GM12878 (cell line): ENCODE measurements at regions of chr10 and their contacts with region 1.

Region 1: DNA sequence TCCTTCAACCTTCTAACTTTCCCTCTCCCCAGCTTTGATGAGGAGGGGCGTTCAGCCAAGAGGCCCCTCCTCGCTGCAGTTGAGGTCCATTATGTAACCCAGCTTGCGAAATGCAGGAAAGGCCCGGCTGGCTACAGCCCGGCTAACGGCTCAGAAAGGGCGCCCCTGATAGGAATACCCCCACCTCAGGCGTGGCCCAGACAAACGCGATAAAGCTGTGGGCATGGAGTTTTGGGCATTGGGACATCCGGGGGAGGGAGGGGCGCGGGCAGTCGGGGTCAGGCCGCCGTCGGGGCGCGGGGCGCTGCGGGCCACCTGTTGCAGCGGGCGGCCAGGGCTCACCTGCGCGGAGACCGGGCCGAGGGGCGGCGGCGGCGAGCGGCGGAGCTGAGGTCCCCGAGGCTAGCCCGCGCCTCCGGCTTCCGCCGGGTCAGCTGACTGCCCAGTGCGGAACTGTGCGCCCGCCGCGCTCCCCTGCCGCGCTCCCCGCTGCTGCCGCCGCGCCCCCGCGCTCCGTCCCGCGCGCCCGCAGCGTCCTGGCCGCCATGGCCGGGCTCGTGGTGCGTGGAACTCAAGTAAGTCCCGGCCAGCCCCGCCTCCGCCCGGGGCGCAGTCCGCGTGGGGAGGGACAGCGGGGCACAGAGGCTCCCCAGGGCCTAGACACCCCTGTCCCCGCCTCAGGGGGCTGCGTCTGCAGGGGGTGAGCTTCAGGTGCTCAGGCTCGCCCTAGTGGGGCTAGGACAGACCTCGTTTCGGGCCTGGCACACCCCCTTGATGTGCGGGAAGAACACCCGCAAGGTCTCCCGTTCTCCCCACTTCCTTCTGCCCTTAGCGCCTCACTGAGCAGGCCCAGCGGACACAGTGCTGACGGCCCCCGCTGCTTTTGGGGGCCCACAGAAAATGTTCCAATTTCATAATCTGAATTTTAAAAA is at the start of gene LRMDA:
- DNase-seq: no peak
- ATAC-seq: peak; percentile 64
- H3K4me3 ChIP-seq: no peak within 1 kb of the TSS
- H3K27ac ChIP-seq: no peak within 1 kb of the TSS
- H3K4me1 ChIP-seq: no peaks in the 10 kb centered on the region
- H3K27me3 ChIP-seq: peaks cover 0 to 12% of the 10 kb centered on the region in 2 experiments; a peak in 2 of 4 replicates
- CTCF ChIP-seq: no peak
- EP300 ChIP-seq: no peak
- POLR2A ChIP-seq: no peak
- RAD21 ChIP-seq: no peak
- polyA plus RNA-seq, gene LRMDA: 0.07 TPM in 1 of 2 experiments, not detected in the other

Region 2: DNA sequence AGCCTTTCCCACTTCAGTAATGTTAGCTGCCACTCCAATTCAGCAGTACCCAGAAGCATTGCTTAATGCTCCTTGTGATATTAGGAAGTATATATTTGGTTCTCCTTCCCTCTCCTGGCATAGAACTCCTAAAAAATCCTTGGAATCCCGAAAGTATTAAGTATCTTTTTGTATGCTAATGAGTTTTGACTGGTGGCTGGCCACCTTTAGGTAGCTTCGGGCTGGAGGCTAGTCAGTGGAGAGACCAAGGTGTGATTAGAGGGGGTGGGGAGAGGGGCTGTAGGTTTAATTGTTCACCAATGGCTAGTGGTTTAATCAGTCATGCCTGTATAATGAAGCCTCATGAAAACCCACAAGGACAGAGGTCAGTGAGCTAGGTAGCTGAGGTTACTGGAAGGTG is 207.9 kb before region 1 on chr10:
- CTCF ChIA-PET with region 1: no interaction called
- POLR2A ChIA-PET with region 1: no interaction called
- RAD21 ChIA-PET with region 1: no interaction called
- SMC1A ChIA-PET with region 1: no interaction called
- in situ Hi-C with region 1: no loop called
- intact Hi-C with region 1: no loop called
- DNase-seq: no peak
- ATAC-seq: no peak; the same call in 1 of the 3 replicates
- H3K4me3 ChIP-seq: no peak overlapping the region
- H3K27ac ChIP-seq: no peak overlapping the region
- H3K4me1 ChIP-seq: peaks cover 3% of the 10 kb centered on the region
- H3K27me3 ChIP-seq: no peaks in the 10 kb centered on the region
- CTCF ChIP-seq: no peak
- EP300 ChIP-seq: no peak
- POLR2A ChIP-seq: no peak
- RAD21 ChIP-seq: no peak

Region 3: DNA sequence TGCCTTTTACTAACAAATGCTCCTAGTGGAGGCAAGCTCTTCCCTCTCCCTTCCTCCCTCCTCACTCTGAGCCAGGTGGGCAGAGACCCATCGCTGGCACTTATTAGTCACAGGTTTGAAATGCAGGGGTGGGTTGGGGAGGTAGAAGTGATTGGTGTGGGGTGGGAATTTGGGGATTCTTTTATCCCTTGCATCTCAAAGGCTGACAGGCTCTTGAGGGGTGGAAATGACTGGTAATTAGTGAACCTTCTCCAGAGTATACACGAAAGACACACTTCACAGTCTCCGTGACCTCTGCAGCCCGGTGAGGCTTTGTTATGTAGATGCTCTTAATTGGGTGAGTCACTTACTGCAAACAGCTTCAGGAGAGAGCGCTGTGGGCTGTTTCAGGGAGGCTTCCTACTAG is 13.9 kb before region 1 on chr10:
- CTCF ChIA-PET with region 1: interaction called, 4 read pairs
- POLR2A ChIA-PET with region 1: interaction called, 3 read pairs
- RAD21 ChIA-PET with region 1: interaction called, 3 read pairs
- SMC1A ChIA-PET with region 1: interaction called, 16 read pairs
- in situ Hi-C with region 1: no loop called
- intact Hi-C with region 1: no loop called
- DNase-seq: no peak
- ATAC-seq: no peak
- H3K4me3 ChIP-seq: no peak overlapping the region
- H3K27ac ChIP-seq: no peak overlapping the region
- H3K4me1 ChIP-seq: no peaks in the 10 kb centered on the region
- H3K27me3 ChIP-seq: no peaks in the 10 kb centered on the region; a peak in 1 of 4 replicates
- CTCF ChIP-seq: no peak
- EP300 ChIP-seq: no peak
- POLR2A ChIP-seq: no peak
- RAD21 ChIP-seq: no peak

Region 4: GRCh38 chr10:75530337-75530736 is 98.9 kb after region 1 on chr10:
- CTCF ChIA-PET with region 1: no interaction called
- POLR2A ChIA-PET with region 1: no interaction called
- RAD21 ChIA-PET with region 1: no interaction called
- SMC1A ChIA-PET with region 1: no interaction called
- in situ Hi-C with region 1: no loop called
- intact Hi-C with region 1: no loop called
- DNase-seq: no peak
- ATAC-seq: no peak
- H3K4me3 ChIP-seq: no peak overlapping the region
- H3K27ac ChIP-seq: no peak overlapping the region
- H3K4me1 ChIP-seq: no peaks in the 10 kb centered on the region
- H3K27me3 ChIP-seq: no peaks in the 10 kb centered on the region
- CTCF ChIP-seq: no peak
- EP300 ChIP-seq: no peak
- POLR2A ChIP-seq: no peak
- RAD21 ChIP-seq: no peak